ENCODE measurements at regions of chr15 and their contacts with region 1.

Region 1: GRCh38 chr15:36883713-36884517 is 216.4 kb downstream of the MEIS2 start:
- DNase-seq: peak; percentile 83
- CTCF ChIP-seq: peak; percentile 75

Region 2: DNA sequence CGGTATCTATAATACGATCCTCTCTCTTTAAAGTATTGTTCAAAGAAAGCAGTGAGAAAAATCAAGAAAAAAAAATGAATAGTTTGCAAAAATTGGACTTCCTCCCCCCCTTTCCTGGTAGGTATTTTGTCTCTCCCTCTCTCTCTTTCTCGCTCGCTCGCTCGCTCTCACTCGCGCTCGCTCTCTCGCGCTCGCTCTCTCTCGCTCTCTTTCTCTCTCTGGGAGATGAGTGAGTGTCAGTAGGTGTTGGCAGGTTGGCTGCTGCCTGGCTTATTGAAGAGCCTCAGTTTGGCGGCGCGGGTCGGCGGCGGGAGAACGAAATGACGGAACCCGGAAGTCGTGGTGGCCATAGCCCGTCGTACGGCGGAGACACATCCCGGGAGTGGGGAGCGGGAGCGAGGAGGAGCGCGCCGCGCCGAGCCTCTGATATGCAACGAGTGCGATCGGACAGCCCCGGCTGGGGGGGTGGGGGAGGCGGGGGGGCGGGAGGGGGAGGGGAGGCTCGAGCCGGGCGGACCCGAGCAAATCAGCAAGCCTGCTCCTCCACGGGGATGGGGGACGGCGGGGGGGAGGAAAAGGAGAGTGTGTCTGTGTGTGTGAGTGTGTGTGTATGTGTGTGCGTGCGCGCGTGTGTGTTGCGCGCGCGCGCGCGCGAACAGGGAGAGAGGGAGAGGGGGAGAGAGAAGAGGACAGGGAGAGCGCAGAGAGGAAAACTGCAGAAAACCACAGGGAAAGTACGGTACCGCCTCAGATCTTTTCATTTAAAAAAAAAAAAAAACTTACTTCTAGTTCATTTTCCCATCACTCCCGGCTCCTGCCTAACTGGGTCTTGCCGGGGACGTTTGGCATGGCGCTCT is 216.4 kb after region 1 on chr15 and contains the start of gene MEIS2:
- in situ Hi-C with region 1: loop called (anchors 10 kb)
- DNase-seq: peak; percentile 79
- CTCF ChIP-seq: no peak

Region 3: DNA sequence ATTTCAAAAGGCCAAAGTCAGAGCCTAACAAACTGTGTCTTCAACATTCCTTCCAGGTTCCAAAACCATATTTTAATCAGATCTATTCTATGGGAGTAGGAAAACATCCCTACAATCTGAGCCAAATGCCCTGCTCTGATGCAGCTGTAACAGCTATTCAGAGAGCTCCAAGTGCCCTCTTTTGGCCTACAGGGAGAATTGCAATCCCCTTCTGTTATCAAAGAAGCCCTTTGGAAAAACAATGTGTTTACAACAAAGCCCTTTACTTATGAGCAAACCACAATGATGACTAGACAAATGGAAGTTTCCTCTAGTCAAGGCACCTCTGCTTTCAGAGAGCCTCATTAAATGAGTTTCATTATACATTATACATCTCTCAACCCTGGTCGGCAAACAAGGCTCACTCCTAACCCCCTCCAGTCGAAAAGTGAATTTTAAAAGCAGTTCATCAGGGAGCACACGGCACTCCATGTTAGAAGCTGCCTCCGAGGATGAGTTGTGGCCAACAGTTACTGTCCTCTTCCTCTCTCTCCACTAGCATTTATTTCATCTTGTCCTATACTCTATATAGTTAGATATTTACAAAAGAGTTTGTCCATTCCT is 1008.0 kb after region 1 on chr15:
- in situ Hi-C with region 1: loop called (anchors 25 kb)
- DNase-seq: no peak
- CTCF ChIP-seq: peak; percentile 70

Measured in GM13976 (cell line).